ENCODE measurements at regions of chr9 and their contacts with region 1.

Region 1: DNA sequence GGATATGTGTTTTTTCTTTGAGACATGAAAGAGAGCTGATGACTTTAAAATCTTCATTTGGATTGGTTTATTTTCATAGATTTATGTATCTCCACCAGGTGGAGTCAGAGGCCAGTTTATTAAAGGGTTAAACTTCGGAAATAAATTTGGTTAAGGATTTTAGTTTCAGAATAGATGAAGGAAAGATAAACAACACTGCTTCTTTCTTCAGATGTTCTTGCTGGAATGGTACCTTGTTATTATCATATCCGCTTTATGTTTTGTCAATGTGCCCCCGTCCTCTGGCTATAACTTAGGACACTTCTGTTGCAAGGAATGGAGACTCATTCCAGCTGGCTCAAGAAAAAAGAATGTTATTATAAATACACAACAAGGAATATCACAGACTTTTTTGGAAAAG is 81.2 kb downstream of the ALDH1A1 start:
- DNase-seq: no peak
- ATAC-seq: peak; percentile 59

Region 2: GRCh38 chr9:72763022-72763421 is 108.7 kb before region 1 on chr9:
- intact Hi-C with region 1: no loop called
- DNase-seq: no peak
- ATAC-seq: no peak

Region 3: DNA sequence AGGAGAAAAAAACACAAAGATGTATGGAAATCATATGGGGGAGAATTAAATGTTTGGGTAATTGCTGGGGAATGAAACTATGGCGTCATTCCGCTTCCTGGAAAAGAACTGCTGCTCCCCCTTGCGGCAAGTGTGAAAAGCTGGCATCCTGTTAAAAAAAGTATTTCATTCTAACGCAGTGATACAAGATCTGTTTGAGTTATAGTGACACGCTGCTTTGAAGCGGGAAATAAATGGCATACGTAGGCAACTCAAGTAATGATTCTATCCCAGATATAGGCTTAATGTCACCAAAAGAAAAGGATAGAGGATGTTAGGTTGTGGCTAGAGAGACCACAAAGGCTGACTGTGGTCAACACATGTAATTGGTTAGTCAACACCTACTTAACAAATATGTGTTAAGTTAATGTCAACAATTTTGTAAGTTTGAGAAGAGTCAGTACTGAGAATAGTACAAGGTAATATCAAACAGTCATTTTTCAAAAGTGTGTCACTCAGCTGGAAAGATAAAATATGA is 151.4 kb after region 1 on chr9:
- intact Hi-C with region 1: loop called (anchors 5 kb)
- DNase-seq: peak; percentile 47
- ATAC-seq: peak; percentile 85

Measured in Right ventricle myocardium superior (tissue), 1 donor.